PC-9 (cell line): ENCODE measurements at regions of chr11 and their contacts with region 1.

Region 1: GRCh38 chr11:59680287-59681154 is 11.7 kb upstream of the PATL1 start:
- DNase-seq: peak; percentile 65 to 70
- H3K4me3 ChIP-seq: no peak overlapping the region
- H3K27ac ChIP-seq: no peak overlapping the region
- H3K4me1 ChIP-seq: no peaks in the 10 kb centered on the region
- H3K27me3 ChIP-seq: no peaks in the 10 kb centered on the region
- CTCF ChIP-seq: peak; percentile 87

Region 2: DNA sequence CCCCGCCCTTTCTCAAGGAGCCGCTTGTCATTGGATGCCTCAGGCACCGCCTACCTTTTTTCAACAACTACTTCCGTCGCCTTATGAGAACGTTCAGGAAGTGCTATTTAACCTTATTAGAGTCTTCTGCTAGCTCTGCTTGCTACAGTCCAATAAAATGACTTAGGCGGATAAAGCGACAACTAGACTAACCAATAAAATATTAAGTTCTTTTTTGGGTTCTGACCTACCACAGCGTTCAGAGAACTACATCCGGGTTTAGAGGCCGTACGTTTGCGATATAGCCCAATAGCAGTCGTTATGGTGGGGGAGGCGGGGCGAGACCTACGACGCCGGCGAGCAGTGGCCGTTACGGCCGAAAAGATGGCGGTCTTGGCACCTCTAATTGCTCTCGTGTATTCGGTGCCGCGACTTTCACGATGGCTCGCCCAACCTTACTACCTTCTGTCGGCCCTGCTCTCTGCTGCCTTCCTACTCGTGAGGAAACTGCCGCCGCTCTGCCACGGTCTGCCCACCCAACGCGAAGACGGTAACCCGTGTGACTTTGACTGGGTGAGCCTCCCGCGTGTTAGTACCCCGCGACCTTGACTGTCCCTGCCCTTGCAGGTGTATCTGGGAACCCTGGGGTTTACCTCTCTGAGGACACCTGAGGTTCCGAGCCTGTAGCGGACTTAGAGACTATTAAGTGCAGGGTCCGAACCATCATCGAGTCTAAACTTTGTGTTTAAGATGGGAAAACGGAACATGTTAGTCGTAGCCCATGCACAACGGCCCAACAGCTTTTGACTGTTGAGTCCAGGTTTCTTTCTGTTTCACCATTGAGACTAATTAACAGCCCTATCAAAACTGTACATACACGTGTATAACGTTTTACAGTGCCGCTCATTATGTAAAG is 1968.0 kb before region 1 on chr11 and contains the start of gene TMX2:
- CTCF ChIA-PET with region 1: no interaction called
- POLR2A ChIA-PET with region 1: interaction called, 20 read pairs
- intact Hi-C with region 1: no loop called
- DNase-seq: peak; percentile 94 to 100
- H3K4me3 ChIP-seq: peak within 1 kb of the TSS; percentile 97
- H3K27ac ChIP-seq: peak within 1 kb of the TSS; percentile 75
- H3K4me1 ChIP-seq: peaks cover 25% of the 10 kb centered on the region
- H3K27me3 ChIP-seq: no peaks in the 10 kb centered on the region
- CTCF ChIP-seq: no peak
- total RNA-seq, gene TMX2: 124 and 138 TPM in 2 replicates

Region 3: GRCh38 chr11:59207988-59208451 is 472.5 kb before region 1 on chr11:
- CTCF ChIA-PET with region 1: no interaction called
- POLR2A ChIA-PET with region 1: no interaction called
- intact Hi-C with region 1: loop called (anchors 5 kb)
- DNase-seq: peak; percentile 26 to 62
- H3K4me3 ChIP-seq: no peak overlapping the region
- H3K27ac ChIP-seq: no peak overlapping the region
- H3K4me1 ChIP-seq: no peaks in the 10 kb centered on the region
- H3K27me3 ChIP-seq: no peaks in the 10 kb centered on the region
- CTCF ChIP-seq: peak; percentile 85

Region 4: DNA sequence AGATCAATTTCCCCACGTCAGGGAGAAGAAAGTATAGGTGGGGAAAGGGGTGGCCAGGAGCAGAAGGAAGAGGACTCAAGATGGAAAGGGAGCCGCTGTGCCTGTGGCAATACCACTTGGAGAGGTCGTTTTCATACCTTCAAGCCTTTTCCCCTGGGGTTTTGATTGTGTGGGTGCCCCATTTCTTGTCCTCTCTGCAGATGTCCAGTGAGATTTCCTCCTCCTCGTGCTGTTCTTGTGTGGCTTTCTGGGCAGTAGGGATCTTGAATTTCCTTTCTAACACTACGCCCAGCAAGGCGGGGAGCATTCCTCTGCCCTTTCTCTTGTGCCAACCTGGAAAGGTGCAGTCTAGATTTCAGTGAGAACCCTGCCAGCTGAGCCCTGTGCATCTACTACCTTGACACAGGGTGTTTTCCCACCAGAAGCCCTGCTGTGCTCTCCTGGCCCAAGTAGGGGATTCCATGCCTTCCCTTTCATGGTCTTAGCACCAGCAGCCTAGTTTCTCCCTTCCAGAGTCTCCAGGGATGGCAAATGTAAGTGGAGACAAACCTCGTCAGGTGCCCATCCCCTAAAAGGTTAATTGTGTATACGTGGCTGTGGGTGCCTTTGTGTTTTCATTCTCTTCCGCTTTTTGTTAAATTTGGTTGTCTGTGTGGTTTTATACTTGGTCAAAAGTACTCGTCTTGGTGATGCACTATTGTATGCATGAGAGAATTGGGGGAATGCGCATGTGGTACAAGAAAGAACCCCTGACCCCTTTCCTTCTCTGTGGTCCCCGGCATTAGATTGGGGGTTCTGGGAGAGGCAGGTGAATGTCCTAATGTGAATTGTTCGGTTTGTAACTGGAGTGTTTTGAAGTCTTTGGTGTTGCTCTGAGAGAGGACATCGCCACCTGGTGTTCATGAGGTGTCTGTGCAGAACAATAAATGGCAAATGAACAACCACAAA is 396.4 kb before region 1 on chr11:
- CTCF ChIA-PET with region 1: no interaction called
- POLR2A ChIA-PET with region 1: no interaction called
- intact Hi-C with region 1: loop called (anchors 1 kb)
- DNase-seq: peak; percentile 37 to 62
- H3K4me3 ChIP-seq: no peak overlapping the region
- H3K27ac ChIP-seq: no peak overlapping the region
- H3K4me1 ChIP-seq: no peaks in the 10 kb centered on the region
- H3K27me3 ChIP-seq: no peaks in the 10 kb centered on the region
- CTCF ChIP-seq: peak; percentile 87

Region 5: DNA sequence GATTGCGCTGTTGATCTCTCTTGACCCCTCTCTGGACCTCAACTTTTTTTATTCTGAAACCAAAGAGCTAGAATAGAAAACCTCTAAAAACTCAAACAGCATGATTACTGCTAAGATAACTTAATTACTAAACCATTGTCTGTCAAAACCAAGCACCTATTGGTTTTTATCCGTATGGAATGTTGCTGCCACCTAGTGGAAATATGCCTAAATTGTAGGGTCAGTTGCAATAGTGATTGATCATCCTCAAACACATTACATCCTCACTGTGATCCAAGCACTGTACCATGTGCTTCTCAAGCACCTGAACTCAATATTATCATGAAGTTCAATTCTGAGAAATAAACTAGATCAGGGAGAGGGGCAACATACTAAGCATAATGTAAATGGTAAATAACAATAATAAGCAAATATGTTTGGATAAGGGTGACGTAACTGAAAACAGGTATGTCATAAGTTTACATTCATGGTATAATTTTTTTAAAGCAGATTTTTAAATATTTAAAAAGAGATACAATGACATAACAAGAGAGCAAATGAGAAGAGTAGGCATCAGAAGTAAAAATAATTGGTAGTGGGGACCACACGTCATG is 250.5 kb before region 1 on chr11:
- CTCF ChIA-PET with region 1: no interaction called
- POLR2A ChIA-PET with region 1: no interaction called
- intact Hi-C with region 1: loop called (anchors 5 kb)
- DNase-seq: peak; percentile 11 to 62
- H3K4me3 ChIP-seq: no peak overlapping the region
- H3K27ac ChIP-seq: no peak overlapping the region
- H3K4me1 ChIP-seq: no peaks in the 10 kb centered on the region
- H3K27me3 ChIP-seq: no peaks in the 10 kb centered on the region
- CTCF ChIP-seq: peak; percentile 94

Region 6: DNA sequence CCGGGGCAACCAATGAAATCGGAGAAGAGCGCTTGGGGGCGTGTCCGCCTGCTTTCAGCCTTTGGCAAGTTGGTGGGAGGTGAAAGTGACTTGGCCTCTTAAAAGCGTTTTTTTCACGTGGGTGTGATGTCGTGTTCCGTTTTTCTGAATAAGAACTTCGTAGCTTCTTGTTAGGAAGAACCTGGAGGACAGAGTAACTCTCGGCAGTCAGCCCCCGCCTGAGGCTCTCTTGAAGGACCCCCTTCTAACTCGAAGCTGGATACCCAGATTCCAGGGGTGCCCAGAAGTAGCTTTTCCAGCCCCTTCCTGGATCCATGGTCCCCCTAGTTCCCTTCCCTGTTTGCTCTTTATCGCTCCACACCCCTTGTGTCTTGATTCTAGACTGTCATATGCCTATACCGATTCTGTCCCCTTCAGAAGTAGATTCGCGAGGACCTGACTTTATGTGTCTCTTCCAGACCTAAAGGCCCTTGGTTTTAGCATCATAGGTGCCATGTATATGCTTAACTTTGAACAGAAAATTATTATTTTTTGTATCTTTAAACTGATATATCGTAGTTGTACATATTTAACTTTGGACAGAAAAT is 64.0 kb before region 1 on chr11:
- CTCF ChIA-PET with region 1: no interaction called
- POLR2A ChIA-PET with region 1: no interaction called
- intact Hi-C with region 1: no loop called
- DNase-seq: no peak
- H3K4me3 ChIP-seq: peak overlapping the region; percentile 66
- H3K27ac ChIP-seq: peak overlapping the region; percentile 67
- H3K4me1 ChIP-seq: peaks cover 37% of the 10 kb centered on the region
- H3K27me3 ChIP-seq: no peaks in the 10 kb centered on the region
- CTCF ChIP-seq: no peak

Region 7: GRCh38 chr11:59691156-59691555 is 10.6 kb after region 1 on chr11:
- CTCF ChIA-PET with region 1: no interaction called
- POLR2A ChIA-PET with region 1: no interaction called
- intact Hi-C with region 1: no loop called
- DNase-seq: no peak
- H3K4me3 ChIP-seq: no peak overlapping the region
- H3K27ac ChIP-seq: no peak overlapping the region
- H3K4me1 ChIP-seq: peaks cover 8% of the 10 kb centered on the region
- H3K27me3 ChIP-seq: peaks cover 3% of the 10 kb centered on the region; the same call in 1 of the 2 replicates
- CTCF ChIP-seq: no peak

Region 8: GRCh38 chr11:59818572-59818971 is 138.1 kb after region 1 on chr11:
- CTCF ChIA-PET with region 1: no interaction called
- POLR2A ChIA-PET with region 1: no interaction called
- intact Hi-C with region 1: no loop called
- DNase-seq: no peak
- H3K4me3 ChIP-seq: no peak overlapping the region
- H3K27ac ChIP-seq: no peak overlapping the region
- H3K4me1 ChIP-seq: no peaks in the 10 kb centered on the region
- H3K27me3 ChIP-seq: no peaks in the 10 kb centered on the region
- CTCF ChIP-seq: no peak